K562 (cell line): ENCODE measurements at regions of chr6 and their contacts with region 1.

Region 1: DNA sequence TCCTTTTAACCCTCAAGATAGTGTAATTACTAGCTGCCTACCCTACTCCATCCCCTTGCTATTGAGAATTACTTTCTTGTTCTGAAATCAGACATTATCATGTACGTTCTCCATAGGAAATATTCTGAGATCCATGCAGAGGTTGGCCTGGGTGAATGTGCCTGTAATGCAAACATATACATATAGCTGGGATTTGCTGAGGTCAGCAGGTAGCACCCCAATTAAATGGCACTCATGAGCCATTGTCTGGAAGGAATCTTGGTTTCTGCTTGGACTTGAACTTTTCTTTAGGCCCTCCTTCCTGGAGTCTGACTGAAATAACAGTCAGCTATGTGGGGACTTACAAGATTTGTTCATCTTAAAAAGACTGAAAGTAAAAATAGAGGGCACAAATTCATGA is 3.7 kb downstream of the HLA-DQB2 start:
- DNase-seq: no peak
- ATAC-seq: no peak
- H3K4me3 ChIP-seq: no peak overlapping the region
- H3K27ac ChIP-seq: no peak overlapping the region
- H3K4me1 ChIP-seq: peaks cover 0 to 8% of the 10 kb centered on the region in 2 experiments; a peak in 1 of 5 replicates
- H3K27me3 ChIP-seq: peaks cover 19 to 51% of the 10 kb centered on the region in 2 experiments; a peak in 4 of 5 replicates
- CTCF ChIP-seq: no peak
- EP300 ChIP-seq: no peak
- POLR2A ChIP-seq: no peak
- RAD21 ChIP-seq: no peak

Region 2: GRCh38 chr6:32539839-32540238 is 219.8 kb before region 1 on chr6:
- CTCF ChIA-PET with region 1: no interaction called
- POLR2A ChIA-PET with region 1: no interaction called
- in situ Hi-C with region 1: no loop called
- intact Hi-C with region 1: no loop called
- DNase-seq: no peak
- ATAC-seq: no peak
- H3K4me3 ChIP-seq: no peak overlapping the region
- H3K27ac ChIP-seq: no peak overlapping the region
- H3K4me1 ChIP-seq: no peaks in the 10 kb centered on the region
- H3K27me3 ChIP-seq: no peaks in the 10 kb centered on the region
- CTCF ChIP-seq: no peak
- EP300 ChIP-seq: no peak
- POLR2A ChIP-seq: no peak
- RAD21 ChIP-seq: no peak

Region 3: GRCh38 chr6:32664827-32665362 is 94.8 kb before region 1 on chr6:
- CTCF ChIA-PET with region 1: no interaction called
- POLR2A ChIA-PET with region 1: no interaction called
- in situ Hi-C with region 1: loop called (anchors 5 kb)
- intact Hi-C with region 1: no loop called
- DNase-seq: peak in 1 of 4 experiments; percentile 5
- ATAC-seq: peak; percentile 70
- H3K4me3 ChIP-seq: no peak overlapping the region
- H3K27ac ChIP-seq: no peak overlapping the region
- H3K4me1 ChIP-seq: no peaks in the 10 kb centered on the region
- H3K27me3 ChIP-seq: no peaks in the 10 kb centered on the region
- CTCF ChIP-seq: no peak
- EP300 ChIP-seq: no peak
- POLR2A ChIP-seq: no peak
- RAD21 ChIP-seq: no peak

Region 4: DNA sequence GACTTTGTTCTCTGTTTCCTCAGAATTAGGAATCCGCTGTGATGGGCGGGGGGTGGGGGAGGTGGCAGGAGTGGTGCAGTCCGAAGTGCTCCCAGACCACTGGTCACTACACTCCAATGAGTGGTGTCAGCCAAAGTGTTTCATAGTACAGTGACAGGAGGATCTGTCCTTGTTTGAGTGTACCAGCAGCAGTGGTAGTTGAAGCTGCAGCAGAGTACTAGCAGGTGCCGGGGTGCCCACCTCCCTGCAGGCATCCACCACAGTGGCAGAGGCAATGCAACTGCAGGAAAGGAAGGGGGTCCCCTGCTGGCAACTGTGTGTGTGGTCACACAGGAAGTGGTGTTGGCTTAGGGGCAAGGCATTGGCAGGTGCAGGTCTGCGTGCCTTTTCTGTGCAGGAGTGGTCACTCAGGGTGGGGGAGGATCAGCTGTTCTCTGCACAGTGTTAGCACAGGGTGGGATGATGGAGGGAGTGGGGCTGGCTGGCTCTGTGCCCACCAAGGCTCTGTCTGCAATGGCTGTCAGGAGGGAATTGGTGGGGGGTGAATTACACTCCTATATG is 47.4 kb after region 1 on chr6:
- CTCF ChIA-PET with region 1: no interaction called
- POLR2A ChIA-PET with region 1: no interaction called
- in situ Hi-C with region 1: no loop called
- intact Hi-C with region 1: no loop called
- DNase-seq: no peak
- ATAC-seq: no peak
- H3K4me3 ChIP-seq: no peak overlapping the region
- H3K27ac ChIP-seq: no peak overlapping the region
- H3K4me1 ChIP-seq: no peaks in the 10 kb centered on the region
- H3K27me3 ChIP-seq: peaks cover 4 to 11% of the 10 kb centered on the region in 2 experiments; a peak in 4 of 5 replicates
- CTCF ChIP-seq: 0 out of 6 replicates have a peak, but pooled peaks of 1 of the 3 experiments have one; percentile 12
- EP300 ChIP-seq: no peak
- POLR2A ChIP-seq: no peak
- RAD21 ChIP-seq: no peak

Region 5: DNA sequence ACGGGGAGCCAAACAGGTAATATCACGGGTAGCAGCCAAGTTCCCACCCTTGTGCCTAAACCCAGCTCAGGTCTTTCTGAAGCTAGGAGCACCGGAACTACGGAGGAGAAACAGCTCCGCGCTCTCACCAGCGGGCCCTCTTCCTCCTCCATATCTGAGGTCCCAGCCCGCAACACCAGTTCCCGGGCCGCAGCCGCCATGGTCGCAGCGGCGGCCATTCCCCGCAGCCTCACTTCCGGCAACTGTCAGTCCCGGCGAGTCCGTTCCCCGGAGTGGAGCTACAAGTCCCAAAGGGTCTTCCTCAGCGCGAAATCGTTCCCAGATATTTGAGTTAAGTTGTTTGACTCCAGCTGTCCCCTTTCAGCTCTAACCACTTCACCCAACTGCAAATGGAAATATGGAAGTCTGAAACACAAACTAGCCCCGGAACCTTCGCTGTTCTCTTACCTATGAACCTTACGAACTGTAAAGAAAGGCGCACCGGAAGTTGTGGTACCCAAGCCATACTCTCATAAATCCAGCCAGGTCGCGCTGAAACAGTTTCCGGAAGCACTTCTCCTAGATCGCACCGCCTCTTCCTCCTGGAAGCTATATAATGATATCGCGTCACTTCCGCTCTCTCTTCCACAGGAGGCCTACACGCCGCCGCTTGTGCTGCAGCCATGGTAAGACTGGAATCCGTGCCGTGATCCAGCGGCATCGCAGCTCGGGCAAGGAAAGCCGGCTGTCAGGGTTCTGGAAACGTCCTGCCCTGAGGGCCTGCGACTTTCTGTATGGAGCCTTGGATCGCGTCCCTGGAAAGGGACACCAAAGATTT is 512.0 kb after region 1 on chr6 and contains the starts of genes RPS18 and VPS52:
- CTCF ChIA-PET with region 1: no interaction called
- POLR2A ChIA-PET with region 1: no interaction called
- in situ Hi-C with region 1: no loop called
- intact Hi-C with region 1: no loop called
- DNase-seq: peak; percentile 89 to 100 (median 92)
- ATAC-seq: peak; percentile 85
- H3K4me3 ChIP-seq: peak within 1 kb of the TSS; percentile 93
- H3K27ac ChIP-seq: peak within 1 kb of the TSS; percentile 98
- H3K4me1 ChIP-seq: peaks cover 11 to 38% of the 10 kb centered on the region in 2 experiments
- H3K27me3 ChIP-seq: no peaks in the 10 kb centered on the region; a peak in 1 of 5 replicates
- CTCF ChIP-seq: 0 out of 6 replicates have a peak, but pooled peaks of 1 of the 3 experiments have one; percentile 4
- EP300 ChIP-seq: peak; percentile 68; the same call in 1 of the 2 replicates
- POLR2A ChIP-seq: peak; percentile 100
- RAD21 ChIP-seq: peak in 1 of 2 experiments; percentile 16; a peak in 1 of 4 replicates
- polyA plus RNA-seq, gene RPS18: 14,899 to 17,516 TPM
- polyA plus RNA-seq, gene VPS52: 24.4 to 37.6 TPM